ENCODE measurements at regions of chr17 and their contacts with region 1.

Region 1: DNA sequence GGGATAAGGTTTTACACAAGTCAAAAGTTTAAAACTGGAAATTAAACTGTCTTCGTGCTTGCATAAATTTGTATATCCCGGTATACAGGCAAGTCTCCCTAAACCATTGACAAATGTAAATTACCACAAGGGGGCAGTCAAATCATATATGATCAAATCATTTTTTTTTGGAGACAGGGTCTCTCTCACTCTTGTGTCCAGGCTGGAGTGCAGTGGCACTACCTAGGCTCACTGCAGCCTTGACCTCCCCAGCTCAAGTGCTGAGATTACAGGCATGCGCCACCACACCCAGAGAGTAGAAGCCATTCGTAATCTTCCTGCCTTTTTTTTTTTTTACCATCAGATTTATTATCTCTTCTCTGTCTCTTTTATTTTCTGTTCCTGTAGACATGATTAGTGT is 18.5 kb downstream of the TOP2A start:
- DNase-seq: peak; percentile 21
- H3K4me3 ChIP-seq: no peak overlapping the region
- H3K27ac ChIP-seq: no peak overlapping the region
- H3K27me3 ChIP-seq: no peaks in the 10 kb centered on the region
- CTCF ChIP-seq: peak; percentile 64

Region 2: DNA sequence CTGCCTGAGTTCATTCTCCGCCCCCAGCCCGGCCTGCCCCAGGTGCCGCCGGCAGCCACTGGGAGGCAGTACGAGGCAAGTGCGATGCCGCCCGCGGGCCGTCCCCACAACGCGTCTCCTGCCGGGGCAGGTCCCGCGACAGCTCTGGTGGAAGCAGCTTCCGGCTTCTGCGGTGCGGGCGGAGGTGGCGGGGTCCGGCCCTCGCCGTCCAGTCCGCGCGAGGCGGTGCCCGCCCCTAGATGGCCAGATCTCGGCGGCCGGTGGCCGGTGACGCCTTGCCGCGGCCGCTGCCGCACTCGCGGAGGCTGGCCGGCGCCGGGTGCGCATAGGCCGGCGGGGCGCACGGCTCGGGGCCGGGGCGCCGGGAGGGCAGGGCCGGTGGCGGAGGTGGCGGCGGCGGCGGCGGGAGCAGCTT is 36.5 kb before region 1 on chr17:
- CTCF ChIA-PET with region 1: no interaction called
- POLR2A ChIA-PET with region 1: interaction called, 13 read pairs
- DNase-seq: no peak
- H3K4me3 ChIP-seq: peak overlapping the region; percentile 59
- H3K27ac ChIP-seq: no peak overlapping the region
- H3K27me3 ChIP-seq: no peaks in the 10 kb centered on the region
- CTCF ChIP-seq: peak; percentile 70

Region 3: GRCh38 chr17:40387680-40388079 is 11.5 kb before region 1 on chr17:
- CTCF ChIA-PET with region 1: interaction called, 12 read pairs
- POLR2A ChIA-PET with region 1: no interaction called
- DNase-seq: no peak
- H3K4me3 ChIP-seq: no peak overlapping the region
- H3K27ac ChIP-seq: no peak overlapping the region
- H3K27me3 ChIP-seq: no peaks in the 10 kb centered on the region
- CTCF ChIP-seq: no peak

Region 4: DNA sequence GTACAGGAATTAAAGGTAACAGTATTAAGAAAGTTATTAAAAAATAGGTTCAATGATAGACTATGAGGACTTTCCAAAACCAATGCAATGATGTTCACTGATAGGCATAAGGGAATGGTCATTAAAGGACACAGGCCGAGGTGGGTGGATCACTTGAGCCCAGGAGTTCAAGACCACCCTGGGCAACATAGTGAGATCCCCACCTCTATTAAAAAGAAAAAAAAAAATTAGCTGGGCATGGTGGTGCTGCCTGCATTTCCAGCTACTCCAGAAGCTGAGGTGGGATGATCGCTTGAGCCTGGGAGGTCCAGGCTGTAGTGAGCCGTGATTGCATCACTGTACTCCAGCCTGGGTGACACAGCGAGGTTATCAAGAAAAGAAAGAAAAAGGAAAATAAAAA is 12.6 kb after region 1 on chr17:
- CTCF ChIA-PET with region 1: interaction called, 12 read pairs
- POLR2A ChIA-PET with region 1: interaction called, 8 read pairs
- DNase-seq: no peak
- H3K4me3 ChIP-seq: no peak overlapping the region
- H3K27ac ChIP-seq: no peak overlapping the region
- H3K27me3 ChIP-seq: no peaks in the 10 kb centered on the region
- CTCF ChIP-seq: no peak